ENCODE measurements at regions of chr20 and their contacts with region 1.

Region 1: DNA sequence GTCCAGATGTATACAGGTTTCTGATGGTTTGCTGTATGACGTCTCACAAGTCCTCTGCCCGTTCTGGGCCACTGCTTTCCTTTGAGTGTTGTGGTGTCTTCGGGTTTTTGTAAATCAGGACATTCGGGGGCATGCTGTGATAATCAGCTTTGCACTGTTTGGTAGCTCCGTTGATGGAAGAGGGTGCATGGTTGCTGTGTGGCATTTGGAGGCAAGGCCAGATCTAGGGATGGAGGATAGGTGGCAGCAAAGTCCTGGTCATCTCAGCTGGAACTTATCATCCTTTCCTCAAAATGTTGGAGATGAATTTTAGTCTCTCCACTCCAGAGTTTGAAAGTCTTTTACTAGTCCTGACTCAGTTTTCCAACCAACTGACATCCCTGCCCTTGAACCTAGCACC is 91.0 kb downstream of the SCP2D1 start:
- DNase-seq: no peak
- H3K4me3 ChIP-seq: no peak overlapping the region
- H3K27ac ChIP-seq: no peak overlapping the region
- H3K4me1 ChIP-seq: peaks cover 0 to 2% (median under 1%) of the 10 kb centered on the region in 4 experiments; a peak in 3 of 7 replicates
- H3K27me3 ChIP-seq: no peaks in the 10 kb centered on the region
- CTCF ChIP-seq: peak; percentile 37 to 70 (median 55)
- EP300 ChIP-seq: no peak
- POLR2A ChIP-seq: no peak
- RAD21 ChIP-seq: peak; percentile 70 to 74

Region 2: DNA sequence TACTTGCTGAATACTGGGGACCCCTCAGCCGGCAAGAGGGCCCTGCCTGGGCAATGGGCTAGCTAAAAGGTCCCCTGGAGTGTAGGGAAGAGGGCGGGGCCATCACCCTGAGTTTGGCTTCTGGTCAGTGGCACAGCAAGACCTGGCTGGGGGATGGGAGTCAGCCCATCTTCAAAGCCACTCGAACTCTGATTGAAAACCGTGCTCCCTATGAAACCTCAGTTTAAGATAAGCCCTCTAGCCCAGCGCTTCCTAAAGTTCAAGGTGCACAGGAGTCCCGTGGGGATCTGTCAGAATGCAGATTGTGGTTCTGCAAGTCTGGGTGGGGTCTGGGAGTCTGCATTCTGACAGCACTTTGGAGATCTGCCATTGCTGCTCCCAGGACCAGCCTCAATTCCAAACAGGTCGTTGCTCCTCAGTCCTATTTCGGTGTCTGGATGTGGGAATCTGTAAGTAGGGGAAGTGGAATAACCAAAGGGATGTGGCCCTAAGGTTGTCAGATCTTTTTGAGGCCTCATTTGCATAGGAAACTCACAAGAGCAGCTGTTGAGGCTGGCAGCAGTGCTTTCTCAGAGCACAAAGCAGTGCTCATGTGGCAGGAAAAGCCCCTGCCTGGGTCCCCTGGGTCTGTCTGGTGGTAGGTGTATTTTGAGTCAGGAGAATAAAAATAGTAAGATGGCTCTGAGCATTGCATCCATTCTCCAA is 176.3 kb before region 1 on chr20:
- CTCF ChIA-PET with region 1: no interaction called
- POLR2A ChIA-PET with region 1: no interaction called
- DNase-seq: no peak
- H3K4me3 ChIP-seq: no peak overlapping the region
- H3K27ac ChIP-seq: no peak overlapping the region
- H3K4me1 ChIP-seq: peaks cover 0 to 5% (median 1%) of the 10 kb centered on the region in 4 experiments; a peak in 3 of 7 replicates
- H3K27me3 ChIP-seq: no peaks in the 10 kb centered on the region
- CTCF ChIP-seq: no peak
- EP300 ChIP-seq: no peak
- POLR2A ChIP-seq: no peak
- RAD21 ChIP-seq: no peak

Region 3: DNA sequence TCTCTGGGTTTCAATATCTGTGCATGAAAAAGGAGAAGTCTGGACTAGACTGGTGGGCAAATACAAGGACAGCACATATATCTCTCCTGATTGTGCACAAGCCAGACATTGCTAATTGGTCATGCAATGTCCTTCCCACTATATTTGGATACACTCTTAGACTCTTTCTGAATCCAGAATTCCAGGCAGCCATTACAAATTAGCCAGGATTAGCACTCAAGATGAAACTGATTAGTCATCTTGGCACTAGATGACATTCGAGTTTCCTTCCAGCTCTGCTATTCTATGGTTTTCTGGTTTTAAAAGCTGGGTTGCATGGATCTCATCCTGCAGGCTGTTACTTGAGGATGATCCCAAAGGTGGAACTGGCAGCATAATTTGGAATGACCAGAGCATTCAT is 17.9 kb before region 1 on chr20:
- CTCF ChIA-PET with region 1: interaction called, 10 read pairs
- POLR2A ChIA-PET with region 1: no interaction called
- DNase-seq: no peak
- H3K4me3 ChIP-seq: no peak overlapping the region
- H3K27ac ChIP-seq: no peak overlapping the region
- H3K4me1 ChIP-seq: no peaks in the 10 kb centered on the region
- H3K27me3 ChIP-seq: no peaks in the 10 kb centered on the region
- CTCF ChIP-seq: no peak
- EP300 ChIP-seq: no peak
- POLR2A ChIP-seq: no peak
- RAD21 ChIP-seq: no peak

Region 4: GRCh38 chr20:18922898-18923297 is 18.3 kb after region 1 on chr20:
- CTCF ChIA-PET with region 1: interaction called, 10 read pairs
- POLR2A ChIA-PET with region 1: no interaction called
- DNase-seq: no peak
- H3K4me3 ChIP-seq: no peak overlapping the region
- H3K27ac ChIP-seq: no peak overlapping the region
- H3K4me1 ChIP-seq: no peaks in the 10 kb centered on the region
- H3K27me3 ChIP-seq: no peaks in the 10 kb centered on the region
- CTCF ChIP-seq: no peak
- EP300 ChIP-seq: no peak
- POLR2A ChIP-seq: no peak
- RAD21 ChIP-seq: no peak

Measured in H1 (cell line).